Colonic mucosa (tissue), 4 donors: ENCODE measurements at regions of chr15 and their contacts with region 1.

Region 1: GRCh38 chr15:49421991-49422390 is 1.1 kb upstream of the FGF7 start:
- DNase-seq: peak; percentile 41
- H3K4me3 ChIP-seq: no peak overlapping the region
- H3K27ac ChIP-seq: no peak overlapping the region
- H3K4me1 ChIP-seq: no peaks in the 10 kb centered on the region
- H3K27me3 ChIP-seq: no peaks in the 10 kb centered on the region
- CTCF ChIP-seq: peak; percentile 66

Region 2: GRCh38 chr15:49235446-49236124 is 186.4 kb before region 1 on chr15:
- intact Hi-C with region 1: loop called (anchors 5 kb)
- DNase-seq: peak; percentile 51
- H3K4me3 ChIP-seq: no peak overlapping the region
- H3K27ac ChIP-seq: no peak overlapping the region
- H3K4me1 ChIP-seq: no peaks in the 10 kb centered on the region
- H3K27me3 ChIP-seq: no peaks in the 10 kb centered on the region
- CTCF ChIP-seq: peak; percentile 57

Region 3: GRCh38 chr15:49855917-49856637 is 434.1 kb after region 1 on chr15:
- intact Hi-C with region 1: loop called (anchors 10 kb)
- DNase-seq: no peak
- H3K4me3 ChIP-seq: no peak overlapping the region
- H3K27ac ChIP-seq: no peak overlapping the region
- H3K4me1 ChIP-seq: no peaks in the 10 kb centered on the region
- H3K27me3 ChIP-seq: no peaks in the 10 kb centered on the region
- CTCF ChIP-seq: no peak